ENCODE measurements at regions of chr7 and their contacts with region 1.

Region 1: DNA sequence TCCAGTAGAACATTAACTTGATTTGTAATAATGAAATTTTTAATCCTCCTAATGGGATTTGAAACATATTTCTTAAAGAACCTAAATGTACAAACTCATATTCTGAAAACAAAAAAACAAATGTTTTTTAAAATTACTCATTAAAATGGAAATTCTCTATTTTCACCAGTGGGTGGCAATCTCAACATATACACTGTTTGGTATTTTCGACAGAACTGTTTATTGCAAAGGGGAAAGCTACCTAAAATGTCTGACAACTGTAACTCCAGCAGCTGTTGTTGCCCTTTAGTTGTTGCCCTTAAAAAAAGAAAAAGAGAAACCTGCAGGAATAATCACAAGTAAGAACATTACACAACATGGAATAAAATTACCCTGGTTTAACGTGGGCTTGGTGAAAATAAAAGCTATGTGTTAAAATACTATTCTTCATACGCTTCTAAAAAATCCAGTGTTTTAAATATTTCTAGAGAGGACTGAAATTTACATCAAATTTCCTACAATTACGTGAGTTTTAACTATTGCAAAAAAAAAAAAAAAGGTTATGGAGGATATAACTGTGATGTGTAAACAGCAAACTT is 54.5 kb downstream of the COL1A2 start:
- DNase-seq: no peak
- ATAC-seq: peak in 1 of 4 donors; percentile 65
- H3K4me3 ChIP-seq: no peak overlapping the region
- H3K27ac ChIP-seq: no peak overlapping the region
- H3K4me1 ChIP-seq: peaks cover 3% of the 10 kb centered on the region
- H3K27me3 ChIP-seq: no peaks in the 10 kb centered on the region
- CTCF ChIP-seq: peak; percentile 67

Region 2: DNA sequence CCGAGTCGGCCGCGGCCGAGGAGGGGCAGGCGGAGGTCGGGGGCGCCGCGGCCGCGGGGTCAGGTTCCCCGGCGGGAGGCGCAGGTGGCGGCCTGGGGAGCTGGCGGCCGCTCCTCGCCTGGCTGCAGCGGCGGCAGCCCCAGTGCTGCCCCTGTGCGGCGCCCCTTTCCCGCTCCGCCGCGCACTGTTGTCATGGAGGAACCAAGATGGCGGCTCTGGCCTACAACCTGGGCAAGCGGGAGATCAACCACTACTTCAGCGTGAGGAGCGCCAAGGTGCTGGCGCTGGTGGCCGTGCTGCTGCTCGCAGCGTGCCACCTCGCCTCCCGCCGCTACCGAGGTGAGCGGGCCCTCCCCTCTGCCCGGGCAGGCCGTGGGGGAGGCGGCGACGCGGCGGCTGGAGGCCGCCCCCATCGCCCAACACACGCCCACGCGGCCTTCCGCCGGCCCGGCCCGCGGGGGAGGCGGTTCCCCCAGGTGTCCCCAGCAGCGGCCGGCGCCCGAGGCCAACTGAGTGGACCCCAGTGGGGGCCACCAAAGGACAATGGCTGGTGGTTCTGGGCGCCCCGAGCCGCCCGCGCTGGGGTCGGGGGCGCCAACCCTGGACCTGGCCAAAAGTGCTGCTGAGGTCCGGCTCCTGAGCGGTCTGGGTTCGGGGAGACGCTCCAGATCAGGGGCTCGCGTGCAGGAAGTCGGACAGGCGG is 60.8 kb after region 1 on chr7:
- intact Hi-C with region 1: loop called in 1 of 2 experiments (anchors 5 kb)
- DNase-seq: peak; percentile 63 to 80
- ATAC-seq: peak; percentile 82 to 88 (median 85)
- H3K4me3 ChIP-seq: peak overlapping the region; percentile 98
- H3K27ac ChIP-seq: peak overlapping the region; percentile 97
- H3K4me1 ChIP-seq: peaks cover 41% of the 10 kb centered on the region
- H3K27me3 ChIP-seq: no peaks in the 10 kb centered on the region
- CTCF ChIP-seq: peak; percentile 40

Region 3: DNA sequence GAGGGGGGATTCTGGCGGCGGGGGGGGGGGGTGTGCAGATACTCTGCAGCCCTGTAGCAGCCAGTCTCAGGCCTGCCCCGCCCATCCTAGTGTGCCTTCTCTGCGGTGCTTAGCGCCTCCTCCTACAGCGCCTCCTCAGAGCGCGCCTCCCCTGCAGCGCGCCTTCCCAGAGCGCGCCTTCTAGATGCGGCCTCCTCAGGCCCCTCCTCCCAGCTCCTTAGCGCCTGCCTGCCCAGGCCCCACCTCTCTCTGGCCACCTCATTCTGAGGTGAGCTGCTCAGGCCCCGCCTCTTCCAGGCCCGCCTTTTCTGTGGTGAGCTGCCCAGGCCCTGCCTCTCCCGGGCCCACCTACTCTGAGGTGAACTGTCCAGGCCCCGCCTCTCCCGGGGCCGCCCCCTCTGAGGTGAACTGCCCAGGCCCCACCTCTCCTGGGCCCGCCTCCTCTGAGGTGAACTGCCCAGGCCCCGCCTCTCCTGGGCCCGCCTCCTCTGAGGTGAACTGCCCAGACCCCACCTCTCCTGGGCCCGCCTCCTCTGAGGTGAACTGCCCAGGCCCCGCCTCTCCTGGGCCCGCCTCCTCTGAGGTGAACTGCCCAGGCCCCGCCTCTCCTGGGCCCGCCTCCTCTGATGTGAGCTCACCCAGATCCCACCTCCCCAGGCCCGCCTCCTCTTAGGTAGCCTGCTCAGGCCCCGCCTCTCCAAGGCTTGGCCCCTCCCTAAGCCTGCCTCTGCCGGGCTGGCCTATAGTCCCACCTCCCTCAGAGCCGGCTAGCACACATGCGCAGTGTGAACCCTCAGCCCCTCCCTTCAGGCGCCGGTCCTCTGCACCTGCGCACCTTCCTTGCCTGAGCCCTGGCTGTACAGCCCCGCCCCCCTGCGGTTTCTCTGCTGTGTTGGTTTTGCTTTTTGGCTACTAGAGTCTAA is 208.8 kb after region 1 on chr7:
- intact Hi-C with region 1: loop called in 1 of 2 experiments (anchors 5 kb)
- DNase-seq: peak; percentile 87 to 95
- ATAC-seq: peak; percentile 93 to 98 (median 96)
- H3K4me3 ChIP-seq: peak overlapping the region; percentile 66
- H3K27ac ChIP-seq: no peak overlapping the region
- H3K4me1 ChIP-seq: peaks cover 10% of the 10 kb centered on the region
- H3K27me3 ChIP-seq: peaks cover 0 to 29% (median 3%) of the 10 kb centered on the region in 3 donors
- CTCF ChIP-seq: no peak

Region 4: DNA sequence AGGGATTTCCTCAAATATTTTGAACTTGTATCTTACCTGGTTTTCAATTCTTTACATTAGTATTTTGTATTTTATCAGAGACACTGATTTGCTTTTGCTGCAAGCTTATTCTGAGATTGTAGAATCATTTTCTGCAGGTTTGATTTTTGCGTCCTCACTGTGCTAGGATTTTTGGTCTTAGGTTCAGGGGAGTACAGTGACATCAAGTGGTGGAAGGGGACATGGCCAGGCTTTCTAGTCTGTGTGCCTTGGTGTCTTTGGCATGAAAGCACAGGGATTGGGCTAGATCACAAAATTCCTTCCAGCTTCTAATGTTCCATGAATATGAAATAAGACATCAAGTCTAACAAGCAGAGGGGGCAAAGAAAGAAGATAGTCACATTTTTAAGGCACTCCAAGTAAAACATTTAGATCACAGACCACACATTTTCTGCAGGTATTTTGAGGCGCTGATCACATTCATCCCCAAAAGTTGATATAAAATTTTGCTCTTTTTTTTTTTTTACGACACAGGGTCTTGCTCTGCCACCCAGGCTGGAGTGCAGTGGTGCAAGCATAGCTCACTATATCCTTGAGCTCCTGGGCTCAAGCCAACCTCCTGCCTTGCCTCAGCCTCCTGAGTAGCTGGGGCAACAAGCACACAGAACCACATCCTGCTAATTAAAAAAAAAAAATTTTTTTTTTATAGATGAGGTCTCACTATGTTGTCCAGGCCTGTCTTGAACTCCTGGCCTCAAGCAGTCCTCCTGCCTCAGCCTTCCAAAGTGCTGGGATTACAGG is 750.7 kb after region 1 on chr7:
- intact Hi-C with region 1: loop called in 1 of 2 experiments (anchors 5 kb)
- DNase-seq: peak in 1 of 2 donors; percentile 19
- ATAC-seq: peak; percentile 73 to 93 (median 78)
- H3K4me3 ChIP-seq: no peak overlapping the region
- H3K27ac ChIP-seq: no peak overlapping the region
- H3K4me1 ChIP-seq: no peaks in the 10 kb centered on the region
- H3K27me3 ChIP-seq: no peaks in the 10 kb centered on the region
- CTCF ChIP-seq: peak; percentile 75

Region 5: DNA sequence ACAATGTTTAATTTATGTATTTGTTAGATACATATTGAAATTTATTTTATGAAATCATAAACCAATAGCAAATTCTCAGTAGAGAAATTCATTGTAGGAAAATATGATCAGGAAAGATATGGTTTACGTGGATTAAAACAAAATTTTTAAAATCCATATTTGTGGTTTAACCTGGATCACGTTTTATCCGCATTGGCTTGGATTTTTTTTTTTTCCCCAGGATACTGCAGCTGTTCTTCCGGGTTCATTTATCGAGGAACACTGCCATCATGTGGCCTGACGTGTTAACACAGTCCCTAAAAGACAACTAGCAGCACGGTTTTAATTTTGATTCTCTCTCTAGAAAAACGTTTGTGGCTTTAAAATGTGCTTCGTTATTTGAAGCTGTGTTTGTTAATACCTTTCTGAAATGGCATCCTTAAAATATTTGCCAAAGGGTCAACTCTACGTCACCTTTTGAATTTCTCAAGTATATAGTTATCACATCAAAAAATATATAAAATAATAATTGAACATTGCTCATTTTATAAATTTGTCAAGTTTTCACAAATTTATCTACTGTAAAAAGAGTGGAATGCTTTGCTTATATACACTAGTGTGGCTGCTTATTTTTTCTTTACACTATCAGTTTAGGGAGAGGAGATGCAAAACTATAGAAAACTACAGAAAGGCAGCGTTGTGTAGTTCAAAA is 1027.8 kb after region 1 on chr7:
- intact Hi-C with region 1: loop called in 1 of 2 experiments (anchors 5 kb)
- DNase-seq: peak; percentile 42 to 55
- ATAC-seq: peak; percentile 80 to 91 (median 84)
- H3K4me3 ChIP-seq: peak overlapping the region; percentile 52
- H3K27ac ChIP-seq: peak overlapping the region; percentile 74
- H3K4me1 ChIP-seq: no peaks in the 10 kb centered on the region
- H3K27me3 ChIP-seq: no peaks in the 10 kb centered on the region
- CTCF ChIP-seq: peak; percentile 83